ENCODE measurements at regions of chr6 and their contacts with region 1.

Region 1: GRCh38 chr6:116287689-116288282 is 8.1 kb upstream of the TSPYL1 start:
- DNase-seq: no peak
- H3K4me3 ChIP-seq: no peak overlapping the region
- H3K27ac ChIP-seq: no peak overlapping the region
- H3K4me1 ChIP-seq: peaks cover 0 to 2% (median 0%) of the 10 kb centered on the region in 4 experiments; a peak in 1 of 7 replicates
- H3K27me3 ChIP-seq: no peaks in the 10 kb centered on the region
- CTCF ChIP-seq: peak in 2 of 3 experiments; percentile 65 to 79; a peak in 2 of 4 replicates
- EP300 ChIP-seq: no peak
- POLR2A ChIP-seq: no peak
- RAD21 ChIP-seq: peak; percentile 89 to 92

Region 2: GRCh38 chr6:116268589-116269293 is 19.0 kb before region 1 on chr6:
- CTCF ChIA-PET with region 1: interaction called, 17 read pairs
- POLR2A ChIA-PET with region 1: interaction called, 3 read pairs
- DNase-seq: no peak
- H3K4me3 ChIP-seq: no peak overlapping the region
- H3K27ac ChIP-seq: no peak overlapping the region
- H3K4me1 ChIP-seq: peaks cover 0 to 10% (median 7%) of the 10 kb centered on the region in 4 experiments; a peak in 5 of 7 replicates
- H3K27me3 ChIP-seq: no peaks in the 10 kb centered on the region
- CTCF ChIP-seq: peak in 2 of 3 experiments; percentile 81 to 95; a peak in 3 of 4 replicates
- EP300 ChIP-seq: no peak
- POLR2A ChIP-seq: no peak
- RAD21 ChIP-seq: peak; percentile 88

Region 3: DNA sequence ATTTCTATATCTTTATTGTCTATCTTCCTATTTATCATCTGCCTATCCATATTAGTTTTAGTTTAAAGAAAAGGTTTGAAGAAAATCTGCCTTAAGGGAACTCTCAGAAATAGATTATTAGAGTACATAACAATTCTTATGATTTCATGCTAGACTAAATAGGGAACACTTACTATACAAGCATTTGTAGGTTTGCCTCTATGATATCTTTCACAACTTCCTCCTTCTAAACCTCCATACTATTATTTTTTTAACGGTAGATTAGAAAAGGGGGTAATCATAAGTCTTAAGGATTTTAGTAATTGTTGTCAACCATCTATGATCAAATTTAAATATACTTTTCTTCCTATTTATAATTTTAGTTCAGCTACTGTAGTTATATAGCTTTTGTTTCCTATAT is 71.3 kb after region 1 on chr6:
- CTCF ChIA-PET with region 1: interaction called, 17 read pairs
- POLR2A ChIA-PET with region 1: no interaction called
- DNase-seq: no peak
- H3K4me3 ChIP-seq: no peak overlapping the region
- H3K27ac ChIP-seq: no peak overlapping the region
- H3K4me1 ChIP-seq: peaks cover 0 to 7% (median 3%) of the 10 kb centered on the region in 4 experiments; a peak in 4 of 7 replicates
- H3K27me3 ChIP-seq: no peaks in the 10 kb centered on the region
- CTCF ChIP-seq: no peak
- EP300 ChIP-seq: no peak
- POLR2A ChIP-seq: no peak
- RAD21 ChIP-seq: no peak

Region 4: DNA sequence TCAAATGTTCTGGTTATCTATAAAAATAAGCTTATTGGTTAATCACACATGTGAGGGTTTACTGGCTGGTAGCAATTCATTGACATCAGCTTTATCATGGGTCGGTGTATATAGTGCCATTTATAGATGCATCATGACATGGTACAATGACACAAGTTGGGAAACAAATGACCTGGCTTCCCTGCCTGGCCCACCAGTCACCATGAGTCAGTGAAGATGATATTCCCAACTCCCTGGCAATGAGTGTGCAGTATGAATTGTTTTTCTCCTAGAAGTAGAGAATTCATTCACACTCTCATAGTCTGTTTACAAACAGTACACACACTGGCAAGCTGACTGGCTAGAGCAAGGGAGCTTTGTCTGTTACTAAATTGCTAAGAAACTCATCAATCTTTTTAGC is 136.2 kb after region 1 on chr6:
- CTCF ChIA-PET with region 1: interaction called, 16 read pairs
- POLR2A ChIA-PET with region 1: no interaction called
- DNase-seq: no peak
- H3K4me3 ChIP-seq: no peak overlapping the region
- H3K27ac ChIP-seq: no peak overlapping the region
- H3K4me1 ChIP-seq: peaks cover 0 to 3% (median 0%) of the 10 kb centered on the region in 4 experiments; a peak in 2 of 7 replicates
- H3K27me3 ChIP-seq: no peaks in the 10 kb centered on the region
- CTCF ChIP-seq: no peak
- EP300 ChIP-seq: no peak
- POLR2A ChIP-seq: no peak
- RAD21 ChIP-seq: no peak

Region 5: DNA sequence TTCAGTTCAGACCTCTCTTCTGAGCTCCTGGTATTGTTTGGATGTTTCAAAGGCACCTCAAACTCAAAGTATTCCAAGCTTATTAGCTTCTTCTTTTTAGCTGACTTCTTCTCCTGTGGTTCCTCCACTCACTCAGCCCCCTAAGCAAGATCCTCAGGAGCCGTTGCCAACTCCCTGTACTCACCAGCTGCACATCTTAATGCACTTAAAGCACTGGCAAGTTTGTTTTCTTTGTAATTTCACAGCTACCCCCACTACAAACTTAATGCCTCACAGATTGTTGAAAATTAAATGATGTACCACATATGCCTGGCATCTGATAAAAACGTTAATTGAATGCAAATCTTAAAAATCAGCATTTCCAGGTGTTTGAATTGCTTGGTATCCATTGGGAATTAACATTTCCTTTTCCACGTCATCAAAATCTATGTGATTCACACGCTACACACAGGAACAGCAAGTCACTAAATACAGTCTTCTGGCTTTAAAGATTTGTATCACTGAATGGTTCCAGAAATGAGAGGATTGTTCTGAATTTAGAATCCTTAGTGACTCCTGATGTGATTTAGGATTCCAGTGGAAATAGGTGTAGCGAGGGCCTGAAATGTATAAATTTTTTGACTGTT is 197.9 kb after region 1 on chr6:
- CTCF ChIA-PET with region 1: interaction called, 11 read pairs
- POLR2A ChIA-PET with region 1: no interaction called
- DNase-seq: no peak
- H3K4me3 ChIP-seq: no peak overlapping the region
- H3K27ac ChIP-seq: no peak overlapping the region
- H3K4me1 ChIP-seq: no peaks in the 10 kb centered on the region
- H3K27me3 ChIP-seq: no peaks in the 10 kb centered on the region
- CTCF ChIP-seq: no peak
- EP300 ChIP-seq: no peak
- POLR2A ChIP-seq: no peak
- RAD21 ChIP-seq: no peak

Region 6: DNA sequence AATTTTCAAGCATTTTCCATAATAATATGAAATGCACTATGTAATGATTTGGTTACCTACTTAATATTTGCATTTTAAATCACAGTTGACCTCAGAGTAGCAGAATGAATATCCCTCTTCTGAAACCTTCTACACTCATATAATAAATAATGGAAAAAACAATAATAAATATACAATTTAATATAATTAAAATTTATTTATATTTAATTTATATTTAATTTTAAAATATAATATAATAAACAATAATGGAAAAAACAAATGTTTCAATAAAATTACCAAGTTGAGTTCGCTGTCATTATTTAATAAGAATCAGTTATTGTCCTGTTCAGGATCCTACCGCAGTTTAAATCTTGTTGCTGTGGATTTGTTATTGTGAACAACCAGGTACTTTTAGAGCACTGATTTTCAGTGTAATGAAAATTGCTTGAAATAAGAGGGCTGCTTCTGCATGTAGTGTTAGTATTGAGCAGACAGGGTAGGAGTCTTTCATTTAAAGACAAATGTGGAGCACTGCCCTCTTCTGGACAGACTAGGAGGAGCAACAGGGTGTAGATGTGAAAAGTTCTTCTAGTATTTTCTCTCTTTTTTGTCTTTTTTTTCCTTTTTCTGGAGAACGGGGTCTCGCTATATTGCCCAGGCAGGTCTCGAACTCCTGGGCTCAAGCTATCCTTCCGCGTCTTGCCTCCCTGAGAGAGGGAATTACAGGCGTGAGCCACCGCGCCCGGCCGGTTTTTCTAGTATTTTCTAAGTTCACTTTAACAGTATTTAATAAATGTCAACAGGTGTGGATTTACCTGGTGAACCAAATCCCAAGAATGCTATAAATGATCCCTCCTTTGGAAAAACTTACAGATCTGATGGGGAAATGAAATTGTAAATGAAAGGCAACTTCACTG is 244.1 kb after region 1 on chr6:
- CTCF ChIA-PET with region 1: interaction called, 25 read pairs
- POLR2A ChIA-PET with region 1: no interaction called
- DNase-seq: peak in 1 of 2 experiments; percentile 79
- H3K4me3 ChIP-seq: no peak overlapping the region
- H3K27ac ChIP-seq: no peak overlapping the region
- H3K4me1 ChIP-seq: peaks cover 0 to 12% (median 9%) of the 10 kb centered on the region in 4 experiments; a peak in 5 of 7 replicates
- H3K27me3 ChIP-seq: no peaks in the 10 kb centered on the region
- CTCF ChIP-seq: peak in 2 of 3 experiments; percentile 74 to 86; a peak in 3 of 4 replicates
- EP300 ChIP-seq: no peak
- POLR2A ChIP-seq: no peak
- RAD21 ChIP-seq: peak; percentile 66 to 74